ENCODE measurements at regions of chr19 and their contacts with region 1.

Region 1: DNA sequence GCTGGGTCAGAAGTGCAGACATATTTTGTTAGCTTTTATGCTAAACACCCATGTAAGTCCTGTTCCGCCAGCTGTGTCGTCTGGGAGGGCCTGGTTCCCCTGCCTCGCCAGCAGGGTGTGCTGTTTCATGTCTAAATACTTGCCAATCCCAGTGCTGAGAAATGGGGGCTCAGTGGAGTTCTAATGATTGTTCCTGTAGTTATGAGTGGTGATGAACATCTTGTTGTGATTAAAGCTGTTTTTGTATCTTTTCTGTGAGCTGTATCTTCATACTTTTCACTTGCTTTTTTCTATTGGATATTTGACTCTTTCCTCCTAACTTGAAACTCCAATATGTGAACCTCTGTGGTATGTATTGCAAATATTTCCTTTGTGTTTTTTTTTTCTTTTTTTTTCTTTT is 32.7 kb downstream of the KDM4B start:
- DNase-seq: no peak
- H3K4me3 ChIP-seq: no peak overlapping the region
- H3K27ac ChIP-seq: no peak overlapping the region
- H3K4me1 ChIP-seq: no peaks in the 10 kb centered on the region; a peak in 1 of 7 replicates
- H3K27me3 ChIP-seq: no peaks in the 10 kb centered on the region
- CTCF ChIP-seq: peak; percentile 76 to 94 (median 93)
- EP300 ChIP-seq: no peak
- POLR2A ChIP-seq: no peak
- RAD21 ChIP-seq: peak; percentile 57 to 67

Region 2: DNA sequence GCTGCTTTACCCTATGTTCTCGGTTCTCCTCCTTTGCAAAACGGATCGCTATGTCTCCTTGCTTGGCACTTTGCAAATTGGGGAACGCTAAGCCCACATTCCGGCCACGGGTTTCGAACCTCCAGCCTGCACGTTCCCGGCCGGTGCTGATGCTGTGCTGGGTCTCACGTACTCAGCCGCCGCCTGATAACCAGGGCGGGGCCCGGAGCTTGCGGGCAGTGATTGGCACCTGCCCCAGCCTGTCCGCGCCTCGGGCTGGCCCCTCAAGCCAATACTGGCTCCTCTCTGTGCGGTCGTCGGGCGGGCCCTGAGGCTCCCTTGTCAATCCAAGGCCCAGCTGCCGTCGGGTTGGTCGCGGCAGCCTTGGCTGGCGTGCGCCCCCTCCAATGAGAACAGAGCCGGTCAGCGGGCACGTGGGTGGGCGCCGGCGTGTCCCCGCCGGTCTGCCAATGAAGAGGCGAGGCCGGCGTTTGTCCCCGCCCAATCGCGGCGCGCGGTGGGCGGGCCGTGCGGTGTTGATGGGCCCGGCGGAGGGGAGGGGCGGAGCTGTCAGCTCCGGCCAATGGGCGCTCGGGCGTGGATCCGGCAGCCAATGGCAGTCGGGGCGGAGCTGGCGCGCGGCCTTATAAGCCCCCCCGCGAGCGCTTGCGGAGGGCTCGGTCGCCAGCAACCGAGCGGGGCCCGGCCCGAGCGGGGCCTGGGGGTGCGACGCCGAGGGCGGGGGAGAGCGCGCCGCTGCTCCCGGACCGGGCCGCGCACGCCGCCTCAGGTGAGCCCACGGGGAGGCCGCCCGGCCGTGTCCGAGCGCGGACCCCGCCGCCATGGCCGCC is 32.9 kb before region 1 on chr19 and contains the start of gene KDM4B:
- CTCF ChIA-PET with region 1: interaction called, 11 read pairs
- POLR2A ChIA-PET with region 1: interaction called, 4 read pairs
- DNase-seq: peak; percentile 98 to 99
- H3K4me3 ChIP-seq: peak within 1 kb of the TSS; percentile 49 to 67 (median 57)
- H3K27ac ChIP-seq: no peak within 1 kb of the TSS
- H3K4me1 ChIP-seq: peaks cover 3 to 17% (median 14%) of the 10 kb centered on the region in 4 experiments
- H3K27me3 ChIP-seq: peaks cover 0 to 5% (median 0%) of the 10 kb centered on the region in 4 experiments; a peak in 2 of 7 replicates
- CTCF ChIP-seq: no peak
- EP300 ChIP-seq: 0 out of 3 replicates have a peak, but pooled peaks of 1 of the 2 experiments have one; percentile 15
- POLR2A ChIP-seq: peak in 1 of 2 experiments; percentile 85; a peak in 2 of 3 replicates
- RAD21 ChIP-seq: no peak
- total RNA-seq, gene KDM4B: 31.9 and 32.8 TPM in 2 replicates

Region 3: DNA sequence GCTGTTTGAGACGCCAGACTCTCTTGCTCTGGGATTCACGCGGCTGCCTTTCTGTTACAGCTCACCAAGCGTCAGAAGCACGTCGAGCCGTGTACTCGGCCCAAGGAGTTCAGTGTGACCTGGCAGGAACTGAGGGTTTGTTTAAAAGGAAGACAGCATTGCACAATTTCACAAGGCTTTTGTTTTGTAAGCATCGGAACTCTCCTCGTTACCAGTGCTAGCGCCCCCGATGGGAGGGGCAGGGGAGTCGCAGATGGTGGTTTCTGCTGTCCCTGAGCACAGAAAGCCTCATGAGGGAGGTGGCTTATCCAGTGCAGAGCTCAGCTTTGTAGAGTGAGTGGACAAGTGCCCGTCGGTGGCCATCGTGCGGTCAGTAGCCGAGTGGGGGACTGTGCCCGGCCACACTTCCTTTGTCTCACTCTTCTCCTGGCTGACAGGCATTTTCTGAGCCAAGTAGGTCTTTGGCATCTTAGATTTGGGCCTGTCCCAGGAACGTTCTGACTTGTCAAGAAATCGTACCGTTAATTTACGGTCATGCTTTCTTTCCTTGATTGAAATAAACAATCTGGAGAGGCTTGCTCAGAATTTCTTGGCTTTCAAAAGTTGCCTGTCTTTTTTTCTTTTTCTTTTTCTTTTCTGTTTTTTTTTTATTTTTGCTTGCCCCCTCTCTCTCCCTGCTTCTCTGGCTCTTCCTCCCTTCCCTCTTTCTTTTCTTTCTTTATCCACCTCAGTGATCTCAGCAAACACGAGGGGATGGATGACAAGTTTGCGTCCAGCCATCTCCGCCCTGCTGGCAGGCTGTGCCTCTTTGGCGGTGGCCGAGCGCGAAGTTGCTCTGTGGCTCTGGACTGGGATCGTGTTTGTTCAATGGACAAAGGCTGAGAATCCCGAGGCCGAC is 25.0 kb before region 1 on chr19:
- CTCF ChIA-PET with region 1: interaction called, 11 read pairs
- POLR2A ChIA-PET with region 1: interaction called, 4 read pairs
- DNase-seq: peak in 1 of 2 experiments; percentile 70
- H3K4me3 ChIP-seq: no peak overlapping the region
- H3K27ac ChIP-seq: no peak overlapping the region
- H3K4me1 ChIP-seq: peaks cover 0 to 8% (median 2%) of the 10 kb centered on the region in 4 experiments; a peak in 6 of 7 replicates
- H3K27me3 ChIP-seq: no peaks in the 10 kb centered on the region
- CTCF ChIP-seq: peak; percentile 62 to 81 (median 69)
- EP300 ChIP-seq: no peak
- POLR2A ChIP-seq: no peak
- RAD21 ChIP-seq: peak in 1 of 2 experiments; percentile 31; a peak in 1 of 4 replicates

Region 4: GRCh38 chr19:4983346-4983745 is 18.3 kb before region 1 on chr19:
- CTCF ChIA-PET with region 1: interaction called, 32 read pairs
- POLR2A ChIA-PET with region 1: interaction called, 3 read pairs
- DNase-seq: no peak
- H3K4me3 ChIP-seq: no peak overlapping the region
- H3K27ac ChIP-seq: no peak overlapping the region
- H3K4me1 ChIP-seq: peaks cover 0 to 7% (median 3%) of the 10 kb centered on the region in 4 experiments; a peak in 3 of 7 replicates
- H3K27me3 ChIP-seq: no peaks in the 10 kb centered on the region
- CTCF ChIP-seq: no peak
- EP300 ChIP-seq: no peak
- POLR2A ChIP-seq: no peak
- RAD21 ChIP-seq: no peak

Region 5: DNA sequence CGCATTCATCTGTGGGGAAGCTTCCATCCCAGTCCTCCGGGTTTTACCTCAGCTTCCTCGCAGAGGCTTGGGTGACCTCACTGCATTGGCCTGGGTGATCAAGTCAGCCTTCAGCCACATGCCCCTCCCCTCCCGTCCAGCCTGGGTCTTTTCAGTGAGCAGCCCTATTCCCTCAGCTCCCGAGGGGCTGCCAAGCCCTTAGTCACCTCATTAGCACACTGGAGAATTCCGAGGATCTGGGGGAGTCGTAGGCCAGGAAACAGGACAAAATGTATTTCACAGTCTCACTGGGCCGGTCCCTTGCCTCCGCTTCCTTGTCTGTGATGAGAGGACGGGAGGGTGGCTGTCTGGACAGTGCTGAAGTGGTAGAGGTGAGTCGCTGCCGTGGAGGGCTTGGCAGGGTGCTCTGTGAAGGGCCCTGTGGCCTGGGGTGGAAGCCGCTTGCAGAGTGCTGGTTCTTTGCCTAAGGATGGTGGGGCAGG is 12.8 kb before region 1 on chr19:
- CTCF ChIA-PET with region 1: interaction called, 32 read pairs
- POLR2A ChIA-PET with region 1: no interaction called
- DNase-seq: no peak
- H3K4me3 ChIP-seq: no peak overlapping the region
- H3K27ac ChIP-seq: peak overlapping the region; percentile 5; the same call in 1 of the 2 replicates
- H3K4me1 ChIP-seq: peaks cover 0 to 2% (median 2%) of the 10 kb centered on the region in 4 experiments; a peak in 4 of 7 replicates
- H3K27me3 ChIP-seq: no peaks in the 10 kb centered on the region
- CTCF ChIP-seq: no peak
- EP300 ChIP-seq: no peak
- POLR2A ChIP-seq: no peak
- RAD21 ChIP-seq: no peak

Region 6: GRCh38 chr19:5018224-5019015 is 16.8 kb after region 1 on chr19:
- CTCF ChIA-PET with region 1: interaction called, 175 read pairs
- POLR2A ChIA-PET with region 1: no interaction called
- DNase-seq: no peak
- H3K4me3 ChIP-seq: no peak overlapping the region
- H3K27ac ChIP-seq: no peak overlapping the region; the same call in 1 of the 2 replicates
- H3K4me1 ChIP-seq: no peaks in the 10 kb centered on the region; a peak in 2 of 7 replicates
- H3K27me3 ChIP-seq: no peaks in the 10 kb centered on the region
- CTCF ChIP-seq: no peak
- EP300 ChIP-seq: no peak
- POLR2A ChIP-seq: no peak
- RAD21 ChIP-seq: no peak

Region 7: DNA sequence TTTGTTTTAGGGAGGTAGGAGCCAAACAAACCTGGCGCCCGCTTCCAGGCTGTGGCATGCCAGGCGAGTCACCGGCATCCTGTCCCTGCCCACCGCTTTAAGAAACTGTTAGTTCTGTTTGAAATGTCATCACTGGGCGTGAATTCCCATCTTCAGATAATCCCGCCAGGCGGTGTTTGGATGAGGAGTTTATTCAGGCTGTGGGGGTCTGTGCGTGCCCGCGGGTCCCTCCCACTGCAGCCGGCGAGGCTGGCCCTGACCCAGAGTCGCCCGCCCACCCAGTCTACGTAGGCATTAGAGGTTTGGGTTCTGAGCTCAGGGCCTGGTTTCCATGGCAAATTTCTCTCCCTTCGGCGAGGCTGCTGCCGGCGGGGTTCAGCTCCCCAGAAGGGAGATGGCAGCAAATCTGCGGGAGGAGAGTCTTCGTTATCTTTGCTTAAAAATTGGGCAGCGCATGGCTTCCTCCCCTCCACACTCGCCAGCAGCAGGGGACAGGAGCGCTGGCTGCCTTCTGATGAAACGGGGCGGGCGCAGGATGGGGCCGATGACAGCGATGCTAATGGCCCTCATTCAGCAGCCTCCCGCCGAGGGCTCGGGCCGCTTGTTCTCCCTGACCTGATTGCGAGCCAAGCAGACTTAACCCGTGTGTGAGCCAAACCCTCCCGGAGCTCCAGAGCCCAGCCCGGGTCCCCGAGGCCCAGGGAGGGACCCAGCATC is 57.4 kb after region 1 on chr19:
- CTCF ChIA-PET with region 1: no interaction called
- POLR2A ChIA-PET with region 1: no interaction called
- DNase-seq: no peak
- H3K4me3 ChIP-seq: no peak overlapping the region
- H3K27ac ChIP-seq: no peak overlapping the region
- H3K4me1 ChIP-seq: peaks cover 0 to 9% (median 0%) of the 10 kb centered on the region in 4 experiments; a peak in 3 of 7 replicates
- H3K27me3 ChIP-seq: no peaks in the 10 kb centered on the region
- CTCF ChIP-seq: no peak
- EP300 ChIP-seq: no peak
- POLR2A ChIP-seq: no peak
- RAD21 ChIP-seq: no peak